Posterior vena cava (tissue), 2 donors: ENCODE measurements at regions of chr7 and their contacts with region 1.

Region 1: DNA sequence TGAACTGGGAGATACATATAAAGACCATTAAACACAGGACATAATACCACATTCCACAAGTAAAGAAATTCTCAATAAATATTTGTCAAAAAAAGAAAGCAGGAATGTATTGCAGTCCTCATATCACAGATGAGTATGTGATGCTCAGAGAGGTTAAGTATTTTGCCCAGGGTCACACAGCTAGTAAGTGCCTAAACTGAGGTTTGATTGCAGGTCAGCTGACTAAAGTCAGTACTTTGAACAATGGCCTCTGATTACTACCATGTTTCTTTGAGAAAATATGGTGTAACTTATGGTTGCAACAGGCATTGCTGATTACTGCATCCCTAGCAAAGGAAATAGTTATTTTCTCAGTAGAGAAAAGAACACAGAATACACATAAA is 267.1 kb downstream of the ELMO1 start:
- DNase-seq: no peak

Region 2: DNA sequence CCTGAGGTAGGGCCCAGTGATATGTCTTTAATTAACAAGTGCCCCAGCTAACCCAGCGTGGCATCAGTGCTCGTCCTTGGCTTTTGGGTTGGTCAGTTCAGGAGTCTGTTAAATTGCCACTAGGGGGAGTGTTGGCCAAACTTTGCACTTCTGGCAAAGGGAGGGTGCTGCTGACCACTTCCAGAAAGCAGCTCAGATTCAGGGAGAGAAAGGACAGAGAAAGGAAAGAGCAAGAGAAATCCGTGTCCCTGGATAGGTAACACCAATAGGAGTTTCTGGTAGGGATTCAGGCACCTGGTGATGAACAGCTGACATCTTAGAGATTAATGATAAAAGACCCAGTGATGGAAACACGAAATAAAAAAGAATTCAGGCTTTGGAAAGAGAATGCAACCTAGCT is 214.2 kb before region 1 on chr7:
- intact Hi-C with region 1: loop called (anchors 5 kb)
- DNase-seq: no peak

Region 3: DNA sequence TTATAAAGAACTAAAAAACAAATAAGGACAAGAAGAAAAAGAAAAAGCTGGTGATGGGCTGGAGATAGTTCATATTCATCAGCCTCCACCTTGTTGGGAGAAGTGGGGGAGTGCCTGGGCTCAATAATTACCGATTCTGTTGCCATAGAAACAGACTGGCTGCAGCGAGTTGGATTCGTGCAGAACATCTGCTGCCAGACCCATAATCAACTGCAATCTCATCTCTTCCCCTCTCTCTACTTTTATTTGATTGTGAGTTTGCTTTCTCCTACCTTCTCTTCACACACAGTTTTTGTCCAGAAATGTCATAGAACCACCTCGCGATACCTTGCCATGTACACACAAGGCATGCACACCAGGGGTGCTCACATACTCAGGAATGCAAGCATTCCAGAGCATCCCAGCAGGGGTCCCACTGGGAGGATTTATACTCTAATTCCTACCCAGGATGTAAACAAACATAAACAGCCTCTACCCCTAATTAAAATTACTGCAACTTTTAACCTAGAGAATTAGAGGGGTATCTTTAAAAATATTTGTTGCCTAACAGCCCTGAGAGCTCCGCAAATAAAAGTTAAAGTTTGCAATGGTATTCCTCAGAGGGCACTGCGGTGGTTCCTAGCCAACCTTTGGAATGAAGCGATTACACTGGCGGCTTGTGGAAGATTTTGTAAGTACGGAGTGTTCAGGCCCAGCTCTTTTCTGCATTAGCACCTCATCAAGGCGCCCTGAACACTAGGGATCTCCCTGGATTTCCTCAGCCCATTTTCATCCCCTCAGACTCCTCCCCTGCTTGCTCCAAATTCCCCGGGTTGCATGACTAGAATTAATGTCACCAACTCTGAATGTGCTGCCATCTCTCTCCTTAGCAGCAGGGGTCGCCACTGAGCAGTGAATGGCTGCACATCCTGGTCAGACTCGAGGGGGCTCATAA is 194.8 kb before region 1 on chr7:
- intact Hi-C with region 1: loop called in 1 of 2 experiments (anchors 5 kb)
- DNase-seq: no peak